Right cardiac atrium (tissue), 5 donors: ENCODE measurements at regions of chr17 and their contacts with region 1.

Region 1: GRCh38 chr17:68398691-68399637 is 58.3 kb downstream of the WIPI1 start:
- DNase-seq: peak; percentile 53 to 80 (median 69)
- ATAC-seq: peak; percentile 78 to 83
- H3K4me3 ChIP-seq: no peak overlapping the region
- H3K27ac ChIP-seq: no peak overlapping the region
- H3K4me1 ChIP-seq: peaks cover 3% of the 10 kb centered on the region
- H3K27me3 ChIP-seq: no peaks in the 10 kb centered on the region

Region 2: DNA sequence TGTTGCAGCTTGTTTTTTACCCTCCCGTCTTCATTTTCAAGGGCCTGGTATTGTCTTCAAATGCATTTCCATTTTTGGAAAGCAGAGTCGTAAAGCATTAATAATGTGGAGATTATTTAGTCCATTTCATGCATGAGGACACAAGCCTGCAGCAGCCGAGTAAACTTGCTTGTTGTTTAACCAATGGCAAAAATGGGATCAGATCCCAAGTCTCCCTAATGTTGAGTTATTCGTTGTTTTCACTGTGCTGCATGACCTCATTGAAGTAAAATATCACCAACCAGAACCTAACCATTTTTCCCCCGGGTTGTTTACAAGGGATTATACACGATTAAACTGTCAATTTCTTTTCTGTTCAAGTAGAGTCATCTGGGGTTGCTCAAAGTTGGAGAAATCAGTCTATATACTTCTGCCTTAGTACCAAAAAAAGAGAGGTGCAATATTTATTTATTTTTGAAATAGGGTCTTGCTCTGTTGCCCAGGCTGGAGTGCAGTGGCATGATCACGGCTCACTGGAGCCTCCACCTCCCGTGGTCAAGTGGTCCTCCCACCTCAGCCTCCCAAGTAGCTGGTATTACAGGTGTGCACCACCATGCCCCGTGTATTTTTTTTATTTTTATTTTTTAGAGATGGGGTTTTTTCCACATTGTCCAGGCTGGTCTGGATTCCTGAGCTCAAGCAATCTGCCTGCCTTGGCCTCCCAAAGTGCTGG is 138.8 kb before region 1 on chr17:
- intact Hi-C with region 1: loop called in 2 of 4 experiments (anchors 5 kb)
- DNase-seq: no peak
- ATAC-seq: no peak
- H3K4me3 ChIP-seq: no peak overlapping the region
- H3K27ac ChIP-seq: no peak overlapping the region
- H3K4me1 ChIP-seq: peaks cover 4% of the 10 kb centered on the region
- H3K27me3 ChIP-seq: no peaks in the 10 kb centered on the region

Region 3: GRCh38 chr17:68273722-68274121 is 125.2 kb before region 1 on chr17:
- intact Hi-C with region 1: loop called in 2 of 4 experiments (anchors 10 kb)
- DNase-seq: no peak
- ATAC-seq: no peak
- H3K4me3 ChIP-seq: no peak overlapping the region
- H3K27ac ChIP-seq: no peak overlapping the region
- H3K4me1 ChIP-seq: no peaks in the 10 kb centered on the region
- H3K27me3 ChIP-seq: no peaks in the 10 kb centered on the region

Region 4: GRCh38 chr17:68497885-68498319 is 98.9 kb after region 1 on chr17:
- intact Hi-C with region 1: no loop called
- DNase-seq: no peak
- ATAC-seq: no peak
- H3K4me3 ChIP-seq: no peak overlapping the region
- H3K27ac ChIP-seq: peak overlapping the region; percentile 51
- H3K4me1 ChIP-seq: no peaks in the 10 kb centered on the region
- H3K27me3 ChIP-seq: no peaks in the 10 kb centered on the region